Naive thymus-derived CD4-positive, alpha-beta T cell (primary cell): ENCODE measurements at regions of chr14 and their contacts with region 1.

Region 1: GRCh38 chr14:28751467-28752058 is 15.0 kb upstream of the FOXG1 start:
- DNase-seq: no peak
- ATAC-seq: no peak
- H3K4me3 ChIP-seq: no peak overlapping the region
- H3K4me3 Mint-ChIP-seq: no peak overlapping the region
- H3K27ac ChIP-seq: no peak overlapping the region
- H3K27ac Mint-ChIP-seq: no peak overlapping the region
- H3K4me1 ChIP-seq: no peaks in the 10 kb centered on the region
- H3K4me1 Mint-ChIP-seq: no peaks in the 10 kb centered on the region
- H3K27me3 ChIP-seq: peaks cover 0 to 3% of the 10 kb centered on the region in 2 donors
- H3K27me3 Mint-ChIP-seq: peaks cover 23 to 40% (median 30%) of the 10 kb centered on the region in 5 donors

Region 2: DNA sequence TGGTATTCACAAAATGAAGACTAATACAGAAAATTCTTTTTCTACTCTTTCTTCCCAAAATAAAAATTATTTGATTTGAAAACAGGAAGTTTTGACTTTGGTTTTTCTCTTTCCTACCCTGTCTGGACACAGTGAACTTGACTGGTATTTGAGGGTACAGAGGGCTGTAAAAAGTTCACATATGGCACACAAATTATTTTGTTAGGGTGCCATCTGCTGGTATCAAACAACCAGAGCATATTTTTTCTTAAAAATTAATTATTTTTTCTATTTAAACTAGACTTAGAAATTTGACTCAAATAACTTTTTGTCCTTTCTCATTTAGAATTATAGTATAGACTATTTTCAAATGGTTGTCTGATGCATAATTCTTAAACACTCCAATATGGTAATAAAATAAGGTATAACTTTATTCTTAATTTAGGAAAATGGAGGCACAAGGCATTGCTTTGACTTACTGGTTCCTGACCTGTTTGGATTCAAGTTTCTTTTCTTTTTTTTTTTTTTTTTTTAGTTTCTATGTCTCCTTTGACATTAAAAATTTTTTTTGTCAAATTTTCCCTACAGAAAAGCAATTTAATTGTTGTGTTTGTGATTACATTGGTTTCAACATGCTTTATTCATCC is 785.4 kb after region 1 on chr14:
- CTCF ChIA-PET with region 1: no interaction called
- POLR2A ChIA-PET with region 1: no interaction called
- intact Hi-C with region 1: loop called in 1 of 2 experiments (anchors 5 kb)
- DNase-seq: no peak
- ATAC-seq: no peak
- H3K4me3 ChIP-seq: no peak overlapping the region
- H3K4me3 Mint-ChIP-seq: no peak overlapping the region
- H3K27ac ChIP-seq: no peak overlapping the region
- H3K27ac Mint-ChIP-seq: no peak overlapping the region
- H3K4me1 ChIP-seq: no peaks in the 10 kb centered on the region
- H3K4me1 Mint-ChIP-seq: no peaks in the 10 kb centered on the region
- H3K27me3 ChIP-seq: no peaks in the 10 kb centered on the region
- H3K27me3 Mint-ChIP-seq: no peaks in the 10 kb centered on the region

Region 3: DNA sequence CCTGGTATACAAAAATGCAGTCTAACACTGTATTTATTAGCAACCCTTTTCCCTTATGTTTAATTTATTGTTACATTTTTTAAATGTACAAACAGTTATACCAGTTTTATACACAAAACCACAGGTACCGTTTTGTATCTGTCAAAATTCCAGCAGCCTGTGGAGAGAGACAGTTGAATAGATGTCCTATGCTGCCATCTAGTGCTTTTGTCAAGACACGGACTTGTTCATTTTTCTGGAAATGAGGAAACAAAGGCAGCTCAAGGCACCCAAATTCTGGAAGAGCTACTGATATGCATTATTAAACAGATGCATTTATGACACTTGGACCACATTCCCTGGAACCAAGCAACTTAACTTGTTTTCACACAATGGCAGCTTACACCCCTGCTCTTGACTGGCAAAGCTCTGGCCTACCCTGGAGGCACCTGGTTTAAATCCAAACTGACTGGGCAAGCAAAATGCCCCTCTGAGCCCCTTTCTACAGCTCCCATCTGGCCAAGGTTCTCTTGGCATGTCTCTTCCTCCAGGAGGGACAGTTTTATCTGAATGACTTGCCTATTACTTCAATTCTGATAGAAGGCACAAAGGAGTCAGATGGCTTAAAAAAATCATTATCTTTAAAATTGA is 1463.0 kb after region 1 on chr14:
- CTCF ChIA-PET with region 1: no interaction called
- POLR2A ChIA-PET with region 1: no interaction called
- intact Hi-C with region 1: loop called in 1 of 2 experiments (anchors 5 kb)
- DNase-seq: no peak
- ATAC-seq: no peak
- H3K4me3 ChIP-seq: no peak overlapping the region
- H3K4me3 Mint-ChIP-seq: no peak overlapping the region
- H3K27ac ChIP-seq: no peak overlapping the region
- H3K27ac Mint-ChIP-seq: no peak overlapping the region
- H3K4me1 ChIP-seq: no peaks in the 10 kb centered on the region
- H3K4me1 Mint-ChIP-seq: no peaks in the 10 kb centered on the region
- H3K27me3 ChIP-seq: no peaks in the 10 kb centered on the region
- H3K27me3 Mint-ChIP-seq: no peaks in the 10 kb centered on the region

Region 4: GRCh38 chr14:30270200-30271161 is 1518.9 kb after region 1 on chr14:
- CTCF ChIA-PET with region 1: no interaction called
- POLR2A ChIA-PET with region 1: no interaction called
- intact Hi-C with region 1: loop called in 1 of 2 experiments (anchors 5 kb)
- DNase-seq: peak in 8 of 9 donors; percentile 2 to 60 (median 17)
- ATAC-seq: peak; percentile 77
- H3K4me3 ChIP-seq: no peak overlapping the region
- H3K4me3 Mint-ChIP-seq: peak overlapping the region in 8 of 10 donors; percentile 1 to 64 (median 40)
- H3K27ac ChIP-seq: no peak overlapping the region
- H3K27ac Mint-ChIP-seq: no peak overlapping the region
- H3K4me1 ChIP-seq: no peaks in the 10 kb centered on the region
- H3K4me1 Mint-ChIP-seq: peaks cover 0 to 7% (median 4%) of the 10 kb centered on the region in 7 donors
- H3K27me3 ChIP-seq: no peaks in the 10 kb centered on the region
- H3K27me3 Mint-ChIP-seq: peaks cover 0 to 13% (median 8%) of the 10 kb centered on the region in 5 donors

Region 5: DNA sequence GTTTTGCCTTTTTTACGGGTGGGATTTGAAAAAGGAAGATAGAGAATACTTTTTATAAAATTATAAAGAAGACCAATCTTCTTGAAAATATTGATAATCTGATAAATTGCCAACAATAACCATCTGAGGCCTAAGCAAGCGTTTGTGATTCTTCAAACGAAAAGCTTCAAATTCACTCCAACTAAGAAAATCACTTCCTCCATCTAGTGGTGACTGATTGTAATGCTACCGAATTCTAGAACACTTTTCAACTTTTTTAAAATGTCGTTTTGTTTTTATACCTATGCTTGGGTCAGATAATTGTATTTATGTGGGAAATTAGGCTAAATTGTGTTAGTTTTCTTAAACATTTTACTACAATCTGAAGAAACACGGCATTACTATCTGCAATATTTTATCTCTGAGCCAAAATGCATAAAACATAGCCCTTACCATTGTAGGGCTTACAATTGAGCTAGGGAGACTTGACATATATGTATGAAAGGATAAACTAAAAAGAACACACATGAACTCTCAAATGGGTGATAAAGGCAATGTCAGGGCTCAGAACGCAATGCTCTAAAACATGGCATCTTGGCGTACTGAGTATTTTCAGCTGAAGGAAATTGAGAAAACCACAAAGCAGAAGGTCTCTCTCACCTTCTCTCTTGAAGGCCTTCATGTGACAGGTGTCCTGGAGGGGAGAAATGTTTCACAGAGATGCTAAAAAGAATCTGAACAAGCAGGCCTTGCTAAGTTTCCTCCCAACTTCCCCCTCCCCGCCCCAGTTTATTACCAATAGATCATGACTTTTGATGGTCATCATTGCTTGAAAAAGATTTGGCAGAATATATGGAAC is 1770.6 kb after region 1 on chr14:
- CTCF ChIA-PET with region 1: no interaction called
- POLR2A ChIA-PET with region 1: no interaction called
- intact Hi-C with region 1: loop called in 1 of 2 experiments (anchors 5 kb)
- DNase-seq: peak in 6 of 9 donors; percentile 4 to 55 (median 36)
- ATAC-seq: peak; percentile 70
- H3K4me3 ChIP-seq: no peak overlapping the region
- H3K4me3 Mint-ChIP-seq: peak overlapping the region in 7 of 10 donors; percentile 2 to 59 (median 26)
- H3K27ac ChIP-seq: no peak overlapping the region
- H3K27ac Mint-ChIP-seq: peak overlapping the region in 7 of 9 donors; percentile 6 to 78 (median 43)
- H3K4me1 ChIP-seq: peaks cover 4 to 7% of the 10 kb centered on the region in 2 donors
- H3K4me1 Mint-ChIP-seq: peaks cover 2 to 17% (median 11%) of the 10 kb centered on the region in 7 donors
- H3K27me3 ChIP-seq: no peaks in the 10 kb centered on the region
- H3K27me3 Mint-ChIP-seq: no peaks in the 10 kb centered on the region